Activated naive CD4-positive, alpha-beta T cell treated with anti-CD3 and anti-CD28 coated beads for 36 hours (primary cell): ENCODE measurements at regions of chr16 and their contacts with region 1.

Region 1: DNA sequence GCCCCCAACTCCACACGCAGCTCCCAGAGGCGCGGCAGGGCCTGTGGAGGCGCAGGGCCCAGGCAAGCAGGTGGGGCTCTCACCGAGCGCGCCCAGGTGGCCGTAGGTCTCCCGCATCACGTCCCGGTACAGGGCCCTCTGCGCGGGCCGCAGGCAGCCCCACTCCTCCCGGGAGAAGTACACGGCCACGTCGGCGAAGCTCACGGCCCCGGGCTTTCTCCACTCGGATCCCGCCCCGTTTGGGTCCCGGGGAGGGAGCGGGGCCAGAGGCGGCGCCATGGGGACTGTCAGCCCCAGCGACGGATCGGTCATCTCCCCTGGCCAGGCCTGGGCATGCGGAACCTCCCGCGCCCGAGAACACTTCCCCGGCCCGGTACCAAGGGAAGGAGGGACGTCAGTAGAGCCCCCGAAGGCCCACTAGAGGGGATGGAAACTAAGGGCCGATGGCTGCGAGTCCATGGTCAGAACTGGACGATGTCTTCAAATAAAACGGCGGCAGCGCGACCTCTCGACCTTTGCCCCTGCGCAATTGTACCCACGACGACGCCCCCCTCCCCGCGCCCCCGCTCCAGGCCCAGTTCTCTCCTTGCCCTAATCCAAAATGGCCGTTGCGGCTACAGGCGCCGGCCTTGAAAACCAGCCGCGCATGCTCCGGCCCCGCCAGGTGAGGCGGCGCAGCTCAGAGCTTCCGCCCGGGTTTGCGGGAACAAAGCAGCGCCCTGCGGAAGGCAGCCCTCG is at the start of gene ZNF747:
- DNase-seq: peak; percentile 94
- H3K4me3 Mint-ChIP-seq: peak within 1 kb of the TSS; percentile 96
- H3K27ac Mint-ChIP-seq: peak within 1 kb of the TSS; percentile 99
- H3K4me1 Mint-ChIP-seq: peaks cover 49% of the 10 kb centered on the region
- H3K27me3 Mint-ChIP-seq: no peaks in the 10 kb centered on the region
- total RNA-seq, gene ZNF747: 5.1 to 6.1 TPM

Region 2: DNA sequence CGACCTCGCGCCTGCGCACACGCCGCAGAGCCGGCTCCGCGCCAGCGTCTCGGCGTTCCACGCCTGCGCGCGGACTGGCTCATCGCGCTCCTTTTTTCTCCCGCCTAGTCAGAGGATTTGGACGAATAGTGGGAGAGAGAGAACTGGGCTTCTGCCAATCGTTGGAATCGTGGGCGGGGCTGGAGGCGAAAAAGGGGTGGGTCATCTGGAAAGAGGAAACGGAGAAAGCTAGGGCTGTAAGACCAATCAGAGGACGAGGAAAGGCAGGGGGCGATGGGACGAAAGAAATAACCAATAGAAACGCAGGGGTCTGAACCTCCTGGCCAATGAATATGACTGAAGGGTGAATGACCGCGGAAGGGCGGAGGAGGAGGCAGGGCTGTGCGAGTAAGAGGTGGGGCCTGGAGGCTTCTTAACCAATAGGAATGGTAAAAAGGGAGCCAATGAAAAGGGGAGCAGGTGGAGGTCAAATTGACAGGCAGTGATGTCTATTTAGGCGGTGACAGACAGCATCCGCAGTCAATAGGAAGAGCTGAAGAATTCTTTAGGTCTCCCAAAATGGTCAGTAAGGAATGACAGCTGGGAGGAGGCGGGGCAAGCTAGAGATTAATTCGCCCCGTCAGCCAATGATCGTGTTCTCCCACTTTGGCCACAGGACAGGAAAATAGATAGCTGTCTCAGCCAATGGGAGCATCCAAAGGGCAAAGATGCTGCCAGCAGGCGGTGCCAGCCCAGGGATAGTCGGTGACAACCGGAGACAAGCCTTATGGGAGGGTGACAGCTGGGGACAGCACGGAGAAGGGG is 163.9 kb before region 1 on chr16 and contains the start of gene TBC1D10B:
- CTCF ChIA-PET with region 1: no interaction called
- intact Hi-C with region 1: loop called (anchors 1 kb)
- DNase-seq: peak; percentile 100
- H3K4me3 Mint-ChIP-seq: peak within 1 kb of the TSS; percentile 94
- H3K27ac Mint-ChIP-seq: peak within 1 kb of the TSS; percentile 98
- H3K4me1 Mint-ChIP-seq: peaks cover 40% of the 10 kb centered on the region
- H3K27me3 Mint-ChIP-seq: no peaks in the 10 kb centered on the region
- total RNA-seq, gene TBC1D10B: 36.6 to 38.4 TPM

Region 3: GRCh38 chr16:30458561-30459394 is 75.8 kb before region 1 on chr16:
- CTCF ChIA-PET with region 1: interaction called, 10 read pairs
- intact Hi-C with region 1: no loop called
- DNase-seq: peak; percentile 95
- H3K4me3 Mint-ChIP-seq: peak overlapping the region; percentile 54
- H3K27ac Mint-ChIP-seq: peak overlapping the region; percentile 92
- H3K4me1 Mint-ChIP-seq: peaks cover 46% of the 10 kb centered on the region
- H3K27me3 Mint-ChIP-seq: no peaks in the 10 kb centered on the region

Region 4: DNA sequence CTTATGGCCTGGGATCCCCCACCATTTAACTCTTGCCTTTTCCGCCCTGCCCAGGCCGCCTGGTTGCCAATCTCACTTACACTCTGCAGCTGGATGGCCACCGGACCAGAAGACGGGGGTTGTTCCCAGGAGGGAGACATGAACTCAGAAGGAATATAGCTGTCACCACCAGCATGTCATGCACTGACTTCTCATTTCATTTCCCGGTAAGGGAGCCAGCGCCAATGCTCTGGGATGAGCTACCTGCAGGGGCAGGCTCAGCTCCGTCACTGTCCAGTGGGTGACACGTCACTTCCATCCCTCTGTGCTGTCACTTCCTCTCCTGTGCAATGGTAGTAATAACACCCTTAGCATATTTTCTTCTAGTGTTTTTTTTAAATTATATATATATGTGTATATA is 35.3 kb before region 1 on chr16:
- CTCF ChIA-PET with region 1: no interaction called
- intact Hi-C with region 1: no loop called
- DNase-seq: no peak
- H3K4me3 Mint-ChIP-seq: no peak overlapping the region
- H3K27ac Mint-ChIP-seq: peak overlapping the region; percentile 43
- H3K4me1 Mint-ChIP-seq: peaks cover 8% of the 10 kb centered on the region
- H3K27me3 Mint-ChIP-seq: no peaks in the 10 kb centered on the region

Region 5: DNA sequence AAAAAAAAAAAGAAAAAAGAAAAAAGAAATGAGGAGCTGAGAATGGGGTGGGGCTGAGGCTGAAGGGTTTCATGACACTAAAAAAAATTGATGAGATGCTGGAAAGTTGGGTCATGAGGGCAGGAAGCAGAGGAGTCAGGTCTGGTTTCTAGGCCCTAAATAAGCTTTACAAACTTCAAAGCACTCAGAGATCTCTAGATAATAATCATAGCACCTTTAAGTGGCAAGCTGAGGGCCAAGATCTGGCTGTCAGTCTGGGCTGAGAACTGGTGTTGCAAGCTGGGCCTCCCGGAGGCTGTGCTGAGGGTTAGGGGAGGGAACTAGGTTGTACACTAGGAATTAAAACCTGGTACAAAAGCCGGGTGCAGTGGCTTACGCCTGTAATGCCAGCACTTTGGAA is 17.2 kb after region 1 on chr16:
- CTCF ChIA-PET with region 1: interaction called, 17 read pairs
- intact Hi-C with region 1: loop called (anchors 1 kb)
- DNase-seq: peak; percentile 74
- H3K4me3 Mint-ChIP-seq: peak overlapping the region; percentile 21
- H3K27ac Mint-ChIP-seq: peak overlapping the region; percentile 94
- H3K4me1 Mint-ChIP-seq: peaks cover 57% of the 10 kb centered on the region
- H3K27me3 Mint-ChIP-seq: no peaks in the 10 kb centered on the region

Region 6: DNA sequence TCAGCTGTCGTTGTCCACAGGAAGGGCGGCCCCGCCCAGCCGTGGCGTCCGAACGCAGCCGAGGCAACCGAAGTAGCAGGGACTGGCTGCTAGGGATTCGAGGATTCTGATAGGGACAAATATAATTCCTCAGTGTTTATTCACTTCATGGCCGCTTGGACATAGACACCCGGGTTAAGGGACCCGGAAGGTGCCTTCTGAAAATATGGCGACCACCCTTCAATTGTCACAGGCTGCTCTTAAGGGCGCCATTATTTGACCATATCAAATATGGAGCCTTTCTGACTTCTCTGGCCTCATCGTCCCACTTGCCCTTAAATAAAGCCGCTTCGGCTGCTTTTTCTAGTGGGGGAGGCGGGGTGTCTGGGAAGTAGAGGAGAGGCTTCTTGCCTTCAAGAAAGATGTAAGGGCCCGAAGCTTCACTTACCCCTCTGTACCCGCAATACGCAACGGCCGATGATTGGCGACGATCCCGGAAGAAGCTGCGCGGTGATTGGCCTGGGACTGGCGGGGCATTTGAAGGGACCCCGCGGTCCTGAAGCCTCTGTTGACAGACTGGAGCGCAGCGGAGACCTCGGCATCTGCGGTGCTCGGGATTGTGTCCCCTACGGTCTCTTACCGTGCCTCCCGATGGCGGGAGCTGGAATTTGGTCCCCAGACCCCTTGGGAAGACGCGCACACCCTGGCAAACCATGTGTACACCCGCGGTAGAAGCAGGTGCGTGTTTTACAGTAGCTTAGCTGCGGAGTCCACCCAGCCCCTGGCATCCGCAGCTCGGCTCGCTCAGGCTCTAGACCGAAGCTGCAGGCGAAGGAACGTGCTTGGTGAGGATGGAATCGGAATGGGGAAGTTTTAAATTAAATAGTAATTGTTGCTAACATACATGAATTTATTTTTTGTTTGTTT is 37.4 kb after region 1 on chr16 and contains the start of gene ZNF688:
- CTCF ChIA-PET with region 1: interaction called, 11 read pairs
- intact Hi-C with region 1: loop called (anchors 1 kb)
- DNase-seq: peak; percentile 94
- H3K4me3 Mint-ChIP-seq: peak within 1 kb of the TSS; percentile 89
- H3K27ac Mint-ChIP-seq: peak within 1 kb of the TSS; percentile 94
- H3K4me1 Mint-ChIP-seq: peaks cover 56% of the 10 kb centered on the region
- H3K27me3 Mint-ChIP-seq: no peaks in the 10 kb centered on the region
- total RNA-seq, gene ZNF688: 3.7 to 3.9 TPM

Region 7: DNA sequence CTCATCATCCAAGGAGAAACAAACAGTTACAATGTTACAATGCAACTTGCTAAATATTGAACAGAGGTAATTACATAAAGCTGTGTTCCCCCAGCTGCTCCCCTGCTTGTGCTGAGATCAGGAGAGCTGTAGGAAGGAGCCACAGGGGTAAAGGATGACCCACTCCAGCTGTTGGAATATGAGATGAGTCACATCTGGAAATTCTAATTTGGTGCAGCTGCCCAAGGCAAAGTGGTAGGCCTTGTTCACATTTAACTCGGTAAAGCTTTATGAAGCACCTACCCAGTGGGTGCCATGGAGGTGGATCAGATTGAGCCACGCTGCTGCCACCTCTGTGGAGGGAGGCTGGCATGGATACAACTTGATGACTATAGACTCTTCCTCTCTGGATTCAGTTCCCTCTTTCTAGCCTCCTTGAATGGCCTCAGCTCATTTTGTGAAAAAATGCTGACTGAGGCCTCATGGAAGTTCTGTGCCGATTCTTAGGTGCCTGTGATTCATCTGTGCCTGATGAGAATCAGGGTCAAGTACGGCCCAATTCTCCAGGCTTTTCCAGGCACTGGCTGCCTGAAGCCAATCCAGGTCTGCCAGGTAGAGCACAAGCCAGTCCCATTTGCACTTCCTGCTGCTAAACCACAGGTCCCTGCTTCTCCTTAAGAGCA is 68.2 kb after region 1 on chr16:
- CTCF ChIA-PET with region 1: interaction called, 14 read pairs
- intact Hi-C with region 1: loop called (anchors 1 kb)
- DNase-seq: no peak
- H3K4me3 Mint-ChIP-seq: no peak overlapping the region
- H3K27ac Mint-ChIP-seq: no peak overlapping the region
- H3K4me1 Mint-ChIP-seq: peaks cover 10% of the 10 kb centered on the region
- H3K27me3 Mint-ChIP-seq: no peaks in the 10 kb centered on the region